GM13977 (cell line): ENCODE measurements at regions of chr10 and their contacts with region 1.

Region 1: DNA sequence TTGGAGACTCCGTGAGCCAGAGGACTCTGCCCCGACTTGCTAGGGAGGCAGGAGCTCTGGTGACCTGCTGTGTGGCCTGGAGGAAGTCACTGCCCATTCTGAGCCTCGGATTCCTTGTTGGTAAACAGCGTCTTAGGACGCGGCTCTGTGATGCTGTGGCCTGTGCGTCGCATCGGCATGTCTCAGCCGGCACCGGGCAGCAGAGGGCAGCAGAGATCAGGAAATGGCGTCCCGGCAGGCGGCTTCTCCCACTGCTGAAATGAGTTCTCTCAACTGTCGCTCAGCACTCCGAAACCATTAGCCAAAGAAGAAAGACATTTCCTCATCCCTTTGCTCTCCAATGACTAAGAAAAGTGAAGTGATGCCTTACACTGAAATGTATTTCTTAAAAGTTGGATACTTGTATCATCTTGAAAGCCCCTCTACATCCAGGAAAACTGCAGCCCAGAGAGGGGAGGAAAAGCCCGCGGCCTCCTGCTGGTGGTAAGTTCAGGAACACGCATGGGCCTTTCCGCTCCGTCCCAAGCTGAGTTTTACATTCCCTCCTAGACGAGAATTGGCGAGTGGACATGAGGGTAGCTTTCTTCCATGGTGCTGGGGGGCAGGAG is 91.7 kb downstream of the WDR11 start:
- DNase-seq: peak; percentile 83
- CTCF ChIP-seq: peak; percentile 93

Region 2: DNA sequence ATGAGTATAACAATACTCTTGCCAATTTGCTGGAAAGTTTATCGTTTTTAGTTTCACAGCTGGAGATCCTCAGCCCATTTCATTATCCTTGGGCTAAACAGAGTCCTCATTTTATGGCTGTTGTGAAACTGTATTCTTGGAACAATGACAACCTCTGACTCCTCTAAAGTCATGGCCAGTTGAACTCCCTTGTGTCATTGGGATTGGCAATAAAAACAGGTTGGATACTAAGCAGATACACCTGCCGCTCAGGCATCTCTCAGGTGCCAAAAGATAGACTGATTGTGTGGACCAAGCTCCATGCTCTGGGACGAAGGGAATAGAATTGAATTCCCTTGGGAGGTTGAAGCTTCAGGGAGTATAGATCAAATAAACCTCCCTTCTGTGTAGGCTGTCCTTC is 90.5 kb after region 1 on chr10:
- in situ Hi-C with region 1: no loop called
- DNase-seq: no peak
- CTCF ChIP-seq: no peak

Region 3: GRCh38 chr10:121734589-121735045 is 791.7 kb after region 1 on chr10:
- in situ Hi-C with region 1: loop called (anchors 25 kb)
- DNase-seq: peak; percentile 65
- CTCF ChIP-seq: peak; percentile 67

Region 4: DNA sequence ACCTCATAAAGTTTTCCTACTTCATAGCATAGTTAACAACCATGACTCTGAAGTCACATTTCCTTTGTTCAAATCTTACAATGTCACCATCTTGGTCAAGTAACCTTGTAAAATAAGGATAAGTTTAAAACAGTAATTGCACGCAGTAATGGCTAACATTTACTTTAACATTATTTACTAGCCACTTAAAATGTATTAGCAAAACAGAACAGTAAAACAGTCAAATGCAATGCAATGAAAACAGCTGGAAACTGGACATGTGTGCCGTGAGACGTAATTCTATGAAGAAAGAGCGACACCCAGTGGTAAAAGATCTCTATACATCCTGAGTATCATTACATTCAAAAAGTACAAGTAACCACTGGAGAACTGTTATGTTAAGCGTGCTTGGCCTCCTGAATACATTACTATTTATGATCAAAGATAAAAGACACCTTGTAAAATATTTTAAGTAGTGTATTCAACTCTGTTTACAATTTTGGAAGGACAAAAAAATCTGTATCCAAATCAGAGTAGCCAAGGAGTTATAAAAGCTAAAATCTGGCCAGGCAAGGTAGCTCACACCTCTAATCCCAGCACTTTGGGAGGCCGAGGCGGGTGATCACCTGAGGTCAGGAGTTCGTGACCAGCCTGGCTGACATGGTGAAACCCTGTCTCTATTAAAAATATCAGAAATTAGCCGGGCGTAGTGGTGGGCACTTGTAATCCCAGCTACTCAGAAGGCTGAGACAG is 957.7 kb after region 1 on chr10:
- in situ Hi-C with region 1: loop called (anchors 25 kb)
- DNase-seq: peak; percentile 64
- CTCF ChIP-seq: peak; percentile 48